Right ventricle myocardium superior (tissue), 1 donor: ENCODE measurements at regions of chr4 and their contacts with region 1.

Region 1: GRCh38 chr4:168710353-168710946 is 213.6 kb downstream of the PALLD start:
- DNase-seq: no peak
- ATAC-seq: peak; percentile 81

Region 2: DNA sequence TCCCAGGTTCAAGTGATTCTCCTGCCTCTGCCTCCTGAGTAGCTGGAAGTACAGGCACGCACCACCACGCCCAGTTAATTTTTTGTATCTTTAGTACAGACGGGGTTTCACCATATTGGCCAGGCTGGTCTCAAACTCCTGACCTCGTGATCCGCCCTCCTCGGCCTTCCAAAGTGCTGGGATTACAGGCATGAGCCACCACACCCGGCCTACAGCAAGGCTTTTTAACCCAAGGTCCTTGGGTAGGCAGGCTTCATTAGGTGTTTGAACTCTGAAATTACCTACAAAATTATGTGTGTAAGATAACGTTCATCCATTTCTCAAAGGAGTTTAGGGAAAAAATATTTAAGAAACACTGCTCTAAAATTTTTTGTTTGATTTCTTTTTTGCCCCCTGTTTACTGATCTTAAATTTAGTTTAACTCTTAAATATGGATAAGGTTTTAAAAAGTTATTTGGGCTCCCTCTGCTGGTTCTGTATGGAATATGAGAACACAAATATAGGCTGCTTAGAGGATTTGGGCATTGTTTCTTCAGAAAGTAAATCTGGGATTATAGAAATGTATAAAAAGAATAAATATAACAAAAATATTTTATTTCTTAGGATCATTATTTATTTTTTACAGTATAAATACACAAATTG is 206.8 kb after region 1 on chr4:
- intact Hi-C with region 1: loop called (anchors 10 kb)
- DNase-seq: no peak
- ATAC-seq: no peak